ENCODE measurements at regions of chr6 and their contacts with region 1.

Region 1: GRCh38 chr6:160455541-160456213 is 107.5 kb downstream of the SLC22A3 start:
- ATAC-seq: peak; percentile 73 to 94 (median 85)
- H3K4me3 ChIP-seq: no peak overlapping the region
- H3K27ac ChIP-seq: no peak overlapping the region
- H3K4me1 ChIP-seq: no peaks in the 10 kb centered on the region

Region 2: DNA sequence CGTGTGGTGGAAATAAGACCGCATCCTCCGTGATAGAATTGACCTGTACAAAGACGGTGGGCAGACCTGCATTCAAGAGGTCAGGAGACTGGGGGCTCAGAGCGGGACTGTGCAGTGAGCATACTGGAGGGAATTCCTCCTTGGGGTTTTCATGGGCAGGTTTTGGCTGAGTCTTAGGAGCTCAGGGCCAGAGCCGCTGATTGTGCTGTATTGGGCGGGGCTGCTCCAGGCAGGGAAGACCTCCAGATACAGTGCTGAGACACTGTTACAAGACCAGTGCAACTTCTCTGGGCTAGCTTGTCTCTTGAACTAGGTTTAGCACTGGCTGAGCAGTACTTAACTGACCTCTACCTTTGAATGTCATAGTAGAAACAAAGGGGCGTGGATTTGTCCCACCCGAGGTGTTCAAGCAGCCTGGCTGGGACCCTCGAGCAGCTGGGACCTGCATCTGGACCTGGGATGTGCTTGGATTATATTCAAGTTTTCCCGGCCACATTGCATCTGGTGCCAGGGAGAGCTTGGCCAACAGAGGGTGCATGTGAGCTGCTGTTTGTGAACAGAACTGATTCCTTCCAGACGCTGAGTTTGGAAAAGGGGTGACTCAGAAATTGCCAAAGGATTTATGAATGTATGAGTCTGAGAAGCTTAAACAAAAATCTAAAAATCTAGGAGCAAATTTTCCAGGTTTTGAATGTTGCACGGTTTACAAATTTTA is 367.5 kb before region 1 on chr6:
- in situ Hi-C with region 1: loop called in 1 of 9 experiments (anchors 25 kb)
- ATAC-seq: peak; percentile 52 to 94 (median 75)
- H3K4me3 ChIP-seq: no peak overlapping the region
- H3K27ac ChIP-seq: no peak overlapping the region
- H3K4me1 ChIP-seq: no peaks in the 10 kb centered on the region

Region 3: GRCh38 chr6:160102956-160103824 is 352.5 kb before region 1 on chr6:
- in situ Hi-C with region 1: loop called in 3 of 9 experiments (anchors 25 kb)
- ATAC-seq: peak in 3 of 8 experiments; percentile 65 to 69 (median 66)
- H3K4me3 ChIP-seq: no peak overlapping the region
- H3K27ac ChIP-seq: no peak overlapping the region
- H3K4me1 ChIP-seq: no peaks in the 10 kb centered on the region

Region 4: DNA sequence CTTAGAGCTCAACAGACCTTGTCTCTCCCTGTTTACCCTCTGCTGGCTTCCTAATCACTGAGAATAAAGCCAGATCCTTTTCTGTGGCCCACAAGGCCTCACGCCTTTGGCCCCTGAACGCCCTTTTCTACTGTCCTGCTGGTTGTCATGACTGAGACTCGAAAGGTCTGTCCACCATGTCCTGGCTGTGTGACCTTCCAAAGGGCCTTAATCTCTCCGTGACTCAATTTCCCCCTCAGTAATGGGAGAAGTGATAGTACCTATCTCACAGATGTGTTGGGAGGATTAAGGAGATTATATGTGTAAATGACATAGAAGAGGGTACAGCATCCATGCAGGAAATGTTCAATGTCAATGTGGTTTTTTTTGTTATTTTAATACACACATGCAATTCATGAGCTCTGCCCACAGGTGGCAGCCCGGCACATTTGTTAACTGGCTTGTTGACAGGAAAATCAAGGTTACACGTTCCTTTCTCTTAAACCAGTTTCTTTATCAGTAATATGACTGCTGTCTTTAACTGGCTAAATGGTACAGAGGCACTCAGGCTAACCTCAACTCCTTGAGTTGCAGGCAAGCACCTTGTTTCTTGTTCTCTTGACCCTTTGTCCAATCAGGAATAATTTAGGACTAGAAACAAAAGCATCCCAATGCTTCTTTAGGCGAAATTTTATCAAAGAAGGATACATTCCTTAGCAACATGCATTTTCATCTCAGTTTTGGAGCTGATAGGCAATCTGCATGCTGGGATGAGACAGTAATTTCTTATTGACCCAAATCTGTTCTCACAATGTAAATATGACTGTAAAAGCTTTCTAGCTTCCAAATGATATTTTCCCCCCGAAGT is 317.5 kb before region 1 on chr6:
- in situ Hi-C with region 1: loop called in 3 of 9 experiments (anchors 25 kb)
- ATAC-seq: peak in 3 of 8 experiments; percentile 25 to 40 (median 31)
- H3K4me3 ChIP-seq: no peak overlapping the region
- H3K27ac ChIP-seq: no peak overlapping the region
- H3K4me1 ChIP-seq: peaks cover 12% of the 10 kb centered on the region in 2 donors

Region 5: DNA sequence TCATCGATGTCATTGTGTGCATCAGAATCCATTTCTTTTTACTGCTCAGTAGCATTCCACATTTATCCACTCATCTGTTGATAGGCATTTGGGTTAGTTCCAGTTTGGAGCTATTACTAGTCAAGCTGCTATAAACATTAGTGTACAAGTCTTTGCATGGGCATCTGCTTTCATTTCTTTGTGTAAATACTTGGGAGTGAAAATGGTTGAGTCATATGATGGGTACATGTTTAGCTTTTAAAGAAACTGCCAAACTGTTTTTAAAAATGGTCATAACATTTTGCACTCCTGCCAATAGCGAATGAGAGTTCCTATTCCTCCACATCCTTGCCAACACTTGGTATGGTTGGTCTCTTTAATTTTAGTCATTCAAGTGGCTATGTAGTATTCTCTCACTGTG is 175.8 kb before region 1 on chr6:
- in situ Hi-C with region 1: no loop called
- ATAC-seq: no peak
- H3K4me3 ChIP-seq: no peak overlapping the region
- H3K27ac ChIP-seq: no peak overlapping the region
- H3K4me1 ChIP-seq: no peaks in the 10 kb centered on the region

Region 6: DNA sequence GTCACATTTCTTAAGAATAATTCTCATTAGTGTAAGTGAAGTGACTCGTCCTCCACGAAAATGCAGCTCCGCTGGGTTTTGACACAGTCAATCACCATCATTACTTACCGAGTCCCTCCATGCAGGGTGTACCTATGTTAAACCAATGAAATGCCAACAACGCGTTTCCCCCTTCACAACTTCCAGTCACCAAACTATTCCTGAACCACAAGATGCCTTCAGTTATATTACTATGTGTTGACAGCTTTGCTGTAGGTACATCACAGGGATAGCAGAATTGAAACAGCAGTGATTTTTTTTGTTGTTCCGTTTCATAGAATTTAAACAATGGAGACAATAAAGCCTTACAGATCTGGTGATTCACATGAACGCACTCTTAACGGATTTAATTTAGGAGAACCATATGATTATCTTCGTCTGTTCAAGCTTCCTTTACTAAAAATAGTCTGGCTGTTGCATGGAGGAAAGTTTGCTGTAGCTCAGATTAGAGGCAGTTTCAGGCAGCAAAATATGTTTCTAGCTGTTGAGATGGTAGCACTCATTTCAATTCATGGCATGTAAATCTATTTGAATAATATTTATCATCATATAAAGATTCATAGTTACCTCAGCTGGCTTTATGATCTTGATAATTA is 1619.1 kb after region 1 on chr6:
- in situ Hi-C with region 1: no loop called
- ATAC-seq: no peak
- H3K4me3 ChIP-seq: no peak overlapping the region
- H3K27ac ChIP-seq: no peak overlapping the region
- H3K4me1 ChIP-seq: no peaks in the 10 kb centered on the region

Measured in motor neuron (in vitro differentiated cells).